ENCODE measurements at regions of chr7 and their contacts with region 1.

Region 1: GRCh38 chr7:131488361-131488760 is 68.1 kb downstream of the PODXL start:
- DNase-seq: no peak
- H3K4me3 ChIP-seq: no peak overlapping the region
- H3K27ac ChIP-seq: no peak overlapping the region
- H3K27me3 ChIP-seq: no peaks in the 10 kb centered on the region
- CTCF ChIP-seq: peak in 15 of 56 donors; percentile 8 to 35 (median 27)

Region 2: DNA sequence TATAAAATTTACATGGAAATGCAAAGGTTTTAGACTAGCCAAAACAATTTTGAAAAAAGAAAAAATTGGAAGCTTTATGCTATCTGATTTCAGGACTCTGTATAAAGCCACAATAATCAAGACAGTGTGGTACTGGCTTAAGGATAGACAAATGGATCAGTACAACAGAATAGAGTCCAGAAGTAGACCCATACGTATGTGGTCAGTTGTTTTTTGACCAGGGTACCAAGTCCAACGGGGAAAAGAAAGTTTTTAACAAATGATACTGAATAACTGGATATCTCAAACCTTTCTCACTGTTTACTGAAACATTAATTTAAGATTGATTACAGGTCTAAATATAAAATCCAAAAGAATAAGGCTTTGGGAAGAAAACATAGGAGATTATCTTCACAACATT is 11.6 kb before region 1 on chr7:
- intact Hi-C with region 1: loop called in 1 of 2 experiments (anchors 1 kb)
- DNase-seq: no peak
- H3K4me3 ChIP-seq: no peak overlapping the region
- H3K27ac ChIP-seq: no peak overlapping the region
- H3K27me3 ChIP-seq: no peaks in the 10 kb centered on the region
- CTCF ChIP-seq: no peak

Region 3: DNA sequence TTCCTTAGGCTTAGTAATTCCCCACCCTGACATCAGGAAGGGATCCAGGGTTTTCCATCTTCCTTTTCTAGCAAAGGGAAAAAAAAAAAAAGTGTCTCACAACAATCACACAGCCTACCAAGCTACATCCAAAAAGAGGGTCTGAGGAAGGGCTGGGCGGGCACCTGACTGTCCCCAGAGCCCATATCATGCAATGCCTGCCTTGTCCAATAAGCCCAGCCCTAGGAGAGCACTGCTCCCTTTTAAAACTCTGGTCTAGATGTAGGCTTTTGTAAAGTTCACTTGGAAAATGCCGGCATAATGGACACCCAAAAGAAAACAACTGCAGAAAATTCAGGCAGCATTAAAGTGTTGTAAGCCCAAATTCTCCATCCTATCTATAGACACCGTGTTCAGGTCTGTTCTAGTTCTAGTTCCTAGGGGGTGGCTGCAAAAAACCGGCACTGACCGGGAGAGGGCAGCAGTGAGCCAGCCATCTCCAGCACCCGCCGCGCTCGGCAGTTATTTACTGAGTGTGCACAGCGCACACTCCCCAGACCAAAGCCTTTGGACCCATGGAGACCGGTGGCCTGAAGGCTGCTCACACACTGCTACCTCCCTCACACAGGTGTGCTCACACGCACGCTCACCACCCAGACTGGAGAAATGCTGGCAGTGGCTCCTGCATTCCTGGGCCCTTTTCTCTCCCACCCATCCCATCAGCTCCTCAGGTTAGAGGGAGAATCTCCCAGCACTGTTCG is 19.4 kb after region 1 on chr7:
- intact Hi-C with region 1: no loop called
- DNase-seq: peak; percentile 83 to 93 (median 88)
- H3K4me3 ChIP-seq: peak overlapping the region in 22 of 59 donors; percentile 6 to 39 (median 24)
- H3K27ac ChIP-seq: peak overlapping the region in 15 of 59 donors; percentile 2 to 75 (median 14)
- H3K27me3 ChIP-seq: no peaks in the 10 kb centered on the region
- CTCF ChIP-seq: peak; percentile 79 to 98 (median 95)

Region 4: GRCh38 chr7:131600085-131600881 is 111.9 kb after region 1 on chr7:
- intact Hi-C with region 1: no loop called
- DNase-seq: no peak
- H3K4me3 ChIP-seq: no peak overlapping the region
- H3K27ac ChIP-seq: peak overlapping the region in 18 of 59 donors; percentile 0 to 63 (median 27)
- H3K27me3 ChIP-seq: no peaks in the 10 kb centered on the region
- CTCF ChIP-seq: no peak